Activated CD4-positive, alpha-beta memory T cell treated with anti-CD3 and anti-CD28 coated beads for 36 hours (primary cell): ENCODE measurements at regions of chr2 and their contacts with region 1.

Region 1: GRCh38 chr2:45567974-45568789 is 42.9 kb downstream of the SRBD1 start:
- DNase-seq: no peak
- H3K4me3 Mint-ChIP-seq: peak overlapping the region; percentile 60
- H3K27ac Mint-ChIP-seq: peak overlapping the region; percentile 89
- H3K4me1 Mint-ChIP-seq: peaks cover 20% of the 10 kb centered on the region
- H3K27me3 Mint-ChIP-seq: no peaks in the 10 kb centered on the region

Region 2: DNA sequence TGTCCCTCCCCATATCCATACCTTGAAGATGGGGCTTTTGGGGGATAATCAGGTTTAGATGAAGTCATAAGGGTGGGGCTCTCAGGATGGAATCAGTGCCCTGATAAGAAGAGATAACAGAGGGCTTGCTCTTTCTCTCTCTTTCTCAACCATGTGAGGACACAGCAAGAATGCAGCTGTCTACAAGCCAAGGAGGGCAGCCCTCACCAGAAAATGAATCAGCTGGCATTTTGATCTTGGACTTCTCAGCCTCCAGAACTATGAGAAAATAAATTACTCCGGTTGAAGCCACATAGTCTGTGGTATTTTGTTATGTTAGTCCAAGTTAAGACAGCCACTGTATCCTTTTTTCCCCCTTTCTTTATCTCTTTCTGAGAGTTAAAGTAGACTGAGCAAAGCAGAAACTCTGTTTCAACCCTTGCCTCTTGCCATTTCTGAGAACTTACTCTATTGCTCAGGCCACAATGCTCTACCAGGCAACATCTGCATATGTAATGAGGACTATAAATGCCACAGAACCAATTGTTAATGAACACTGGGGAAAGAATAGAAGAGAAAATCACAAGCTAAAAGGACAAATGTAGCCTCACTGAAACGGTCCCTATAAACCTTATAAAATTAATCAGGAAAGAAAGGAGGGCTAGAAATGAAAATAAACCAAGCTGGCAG is 14.0 kb before region 1 on chr2:
- CTCF ChIA-PET with region 1: interaction called, 4 read pairs
- POLR2A ChIA-PET with region 1: interaction called, 5 read pairs
- intact Hi-C with region 1: loop called (anchors 1 kb)
- DNase-seq: peak; percentile 16
- H3K4me3 Mint-ChIP-seq: peak overlapping the region; percentile 12
- H3K27ac Mint-ChIP-seq: peak overlapping the region; percentile 77
- H3K4me1 Mint-ChIP-seq: peaks cover 28% of the 10 kb centered on the region
- H3K27me3 Mint-ChIP-seq: no peaks in the 10 kb centered on the region

Region 3: DNA sequence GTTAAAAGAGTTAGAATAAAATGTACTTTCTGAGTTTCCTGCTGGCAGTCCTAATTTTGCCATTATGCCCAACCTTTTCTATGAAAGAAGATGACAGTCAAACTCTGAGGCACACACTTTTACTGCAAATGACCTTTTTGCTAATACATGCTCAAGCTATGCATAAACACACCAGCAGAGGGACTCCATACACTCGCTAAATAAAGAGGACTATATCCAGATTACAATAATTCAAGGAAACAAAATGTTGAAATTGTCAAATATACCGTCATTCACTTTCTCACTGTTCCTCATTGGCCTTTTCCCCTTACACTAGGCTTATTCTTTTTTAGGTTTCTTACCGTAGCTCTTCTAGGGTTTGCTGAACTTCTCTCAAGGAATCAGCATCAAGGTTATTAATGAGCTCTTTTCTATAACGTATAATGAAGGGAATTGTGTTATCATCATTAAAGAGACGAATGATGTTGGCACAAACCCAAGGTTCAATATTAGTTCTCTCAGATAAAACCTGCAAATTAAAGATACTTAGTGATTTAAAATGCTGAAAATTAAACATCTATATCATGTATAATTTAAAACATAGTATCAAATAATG is 17.2 kb after region 1 on chr2:
- CTCF ChIA-PET with region 1: interaction called, 12 read pairs
- POLR2A ChIA-PET with region 1: no interaction called
- intact Hi-C with region 1: loop called (anchors 2 kb)
- DNase-seq: no peak
- H3K4me3 Mint-ChIP-seq: no peak overlapping the region
- H3K27ac Mint-ChIP-seq: no peak overlapping the region
- H3K4me1 Mint-ChIP-seq: peaks cover 21% of the 10 kb centered on the region
- H3K27me3 Mint-ChIP-seq: no peaks in the 10 kb centered on the region

Region 4: DNA sequence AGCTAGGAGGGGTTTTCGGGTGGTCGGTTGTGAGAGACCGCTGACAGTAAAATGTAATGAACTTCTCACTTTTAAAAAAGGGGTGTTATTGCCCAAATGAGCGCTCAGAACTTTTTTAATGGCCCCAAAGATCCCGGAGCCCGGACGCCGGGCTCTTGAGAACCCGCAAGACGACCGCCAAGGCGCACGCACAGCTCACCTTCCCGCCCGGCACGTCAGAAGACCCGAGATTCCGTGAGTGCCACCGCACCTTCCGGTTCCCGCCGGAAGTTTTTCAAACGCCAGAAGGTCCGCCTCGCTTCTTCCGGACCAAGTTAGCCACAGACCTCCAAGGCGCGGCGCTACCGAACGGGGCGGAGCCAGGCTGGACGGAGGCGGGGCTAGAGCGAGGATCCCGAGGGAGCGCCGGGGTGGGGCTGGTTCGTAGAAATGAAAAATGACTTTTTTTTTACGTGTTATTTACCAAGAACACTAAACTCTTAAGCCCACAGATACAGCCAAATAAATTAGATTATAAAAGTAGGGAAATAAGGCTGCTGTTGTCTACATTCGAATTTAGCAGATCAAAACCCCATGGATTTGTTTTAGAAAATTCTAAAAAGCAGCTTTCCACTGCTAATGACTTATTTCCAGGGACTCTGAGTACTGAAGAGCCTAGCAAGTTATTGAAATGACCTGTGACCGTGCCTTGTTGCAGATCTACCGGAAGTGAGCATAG is 43.0 kb after region 1 on chr2 and contains the start of gene SRBD1:
- CTCF ChIA-PET with region 1: interaction called, 3 read pairs
- POLR2A ChIA-PET with region 1: no interaction called
- intact Hi-C with region 1: loop called (anchors 1 kb)
- DNase-seq: peak; percentile 96
- H3K4me3 Mint-ChIP-seq: peak within 1 kb of the TSS; percentile 95
- H3K27ac Mint-ChIP-seq: peak within 1 kb of the TSS; percentile 94
- H3K4me1 Mint-ChIP-seq: peaks cover 18% of the 10 kb centered on the region
- H3K27me3 Mint-ChIP-seq: no peaks in the 10 kb centered on the region
- total RNA-seq, gene SRBD1: 19.3 to 20.5 TPM

Region 5: DNA sequence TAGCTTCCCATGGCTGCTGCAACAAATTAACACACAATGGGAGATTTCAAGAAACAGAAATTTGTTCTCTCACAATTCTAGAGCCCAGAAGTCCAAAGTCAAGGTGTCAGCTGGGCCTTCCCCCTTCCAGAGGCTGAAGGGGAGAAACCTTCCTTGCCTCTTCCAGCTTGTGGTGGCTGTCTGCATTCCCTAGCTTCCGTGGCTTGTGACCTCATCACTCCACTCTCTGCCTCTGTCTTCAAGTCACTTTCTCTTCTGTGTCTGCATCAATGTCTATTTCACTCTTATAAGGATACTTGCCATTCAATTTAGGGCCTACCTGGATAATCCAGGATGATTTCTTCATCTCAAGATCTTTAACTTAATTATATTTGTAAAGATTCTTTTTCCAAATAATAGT is 59.7 kb after region 1 on chr2:
- CTCF ChIA-PET with region 1: no interaction called
- POLR2A ChIA-PET with region 1: no interaction called
- intact Hi-C with region 1: no loop called
- DNase-seq: no peak
- H3K4me3 Mint-ChIP-seq: no peak overlapping the region
- H3K27ac Mint-ChIP-seq: no peak overlapping the region
- H3K4me1 Mint-ChIP-seq: peaks cover under 1% of the 10 kb centered on the region
- H3K27me3 Mint-ChIP-seq: peaks cover 21% of the 10 kb centered on the region